Lower leg skin (tissue), 4 donors: ENCODE measurements at regions of chr12 and their contacts with region 1.

Region 1: DNA sequence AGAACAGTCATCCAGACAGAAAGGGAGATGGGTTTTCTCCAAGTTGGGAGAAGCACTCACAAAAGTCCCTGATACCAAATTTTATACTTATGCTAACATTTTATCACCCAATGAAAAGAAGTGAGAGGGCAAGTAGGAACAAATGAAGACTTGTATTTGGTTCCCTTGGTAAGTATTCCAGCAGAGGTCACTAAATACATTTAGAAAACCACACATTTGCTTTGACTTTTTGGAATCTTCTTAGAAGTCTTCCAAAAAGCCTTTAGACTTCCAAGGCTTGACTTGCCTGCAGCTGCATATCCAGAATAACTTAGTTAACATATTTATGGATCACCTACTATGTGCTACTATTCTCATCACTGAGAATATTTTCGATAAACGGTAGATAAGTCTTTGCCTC is 3.1 kb upstream of the GYS2 start:
- DNase-seq: no peak
- H3K4me3 ChIP-seq: no peak overlapping the region
- CTCF ChIP-seq: no peak
- POLR2A ChIP-seq: no peak

Region 2: GRCh38 chr12:21683115-21683514 is 75.4 kb after region 1 on chr12:
- intact Hi-C with region 1: loop called (anchors 5 kb)
- DNase-seq: no peak
- H3K4me3 ChIP-seq: no peak overlapping the region
- CTCF ChIP-seq: no peak
- POLR2A ChIP-seq: no peak